Breast epithelium (tissue), 4 donors: ENCODE measurements at regions of chr16 and their contacts with region 1.

Region 1: DNA sequence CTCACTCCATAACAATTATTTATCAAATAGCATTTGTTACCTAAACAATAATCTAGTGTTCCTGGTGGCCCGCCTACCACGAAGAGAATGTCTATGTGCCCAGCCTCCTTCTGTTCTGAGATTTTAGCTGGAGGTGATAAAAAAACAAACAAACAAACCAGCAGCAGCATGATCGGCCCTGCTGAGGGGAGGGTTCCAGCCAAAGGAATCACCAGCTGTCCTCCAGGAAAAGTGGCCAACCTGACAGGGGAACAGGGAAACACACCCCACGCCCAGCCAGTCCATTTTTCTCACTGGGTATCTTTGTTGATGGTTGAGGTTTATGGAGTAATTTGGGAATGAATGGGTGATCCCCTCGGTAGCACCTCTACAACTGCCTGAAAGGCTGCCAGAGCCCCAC is 203.0 kb upstream of the DYNLRB2 start:
- DNase-seq: no peak
- H3K4me3 ChIP-seq: no peak overlapping the region
- H3K27ac ChIP-seq: no peak overlapping the region
- H3K4me1 ChIP-seq: no peaks in the 10 kb centered on the region
- H3K27me3 ChIP-seq: no peaks in the 10 kb centered on the region
- CTCF ChIP-seq: no peak
- POLR2A ChIP-seq: no peak

Region 2: DNA sequence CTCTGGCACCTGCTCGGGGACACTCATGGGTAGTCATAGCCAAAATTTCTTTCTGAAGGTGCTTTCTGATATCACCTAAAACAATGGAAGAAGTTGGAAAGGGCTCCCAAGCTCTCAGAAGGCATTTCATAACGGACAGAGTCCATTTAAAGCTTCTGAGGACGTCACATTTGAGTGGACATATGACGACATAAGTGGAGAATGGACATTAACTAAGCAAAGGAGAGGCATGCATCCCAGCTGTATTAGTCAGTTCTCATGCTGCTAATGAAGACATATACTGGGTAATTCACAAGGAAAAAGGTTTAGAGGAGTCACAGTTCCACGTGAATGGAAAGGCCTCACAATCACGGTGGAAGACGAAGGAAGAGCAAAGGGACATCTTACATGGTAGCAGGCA is 57.2 kb before region 1 on chr16:
- intact Hi-C with region 1: loop called (anchors 2 kb)
- DNase-seq: no peak
- H3K4me3 ChIP-seq: no peak overlapping the region
- H3K27ac ChIP-seq: no peak overlapping the region
- H3K4me1 ChIP-seq: no peaks in the 10 kb centered on the region
- H3K27me3 ChIP-seq: no peaks in the 10 kb centered on the region
- CTCF ChIP-seq: no peak
- POLR2A ChIP-seq: no peak